WTC11 (cell line): ENCODE measurements at regions of chr6 and their contacts with region 1.

Region 1: DNA sequence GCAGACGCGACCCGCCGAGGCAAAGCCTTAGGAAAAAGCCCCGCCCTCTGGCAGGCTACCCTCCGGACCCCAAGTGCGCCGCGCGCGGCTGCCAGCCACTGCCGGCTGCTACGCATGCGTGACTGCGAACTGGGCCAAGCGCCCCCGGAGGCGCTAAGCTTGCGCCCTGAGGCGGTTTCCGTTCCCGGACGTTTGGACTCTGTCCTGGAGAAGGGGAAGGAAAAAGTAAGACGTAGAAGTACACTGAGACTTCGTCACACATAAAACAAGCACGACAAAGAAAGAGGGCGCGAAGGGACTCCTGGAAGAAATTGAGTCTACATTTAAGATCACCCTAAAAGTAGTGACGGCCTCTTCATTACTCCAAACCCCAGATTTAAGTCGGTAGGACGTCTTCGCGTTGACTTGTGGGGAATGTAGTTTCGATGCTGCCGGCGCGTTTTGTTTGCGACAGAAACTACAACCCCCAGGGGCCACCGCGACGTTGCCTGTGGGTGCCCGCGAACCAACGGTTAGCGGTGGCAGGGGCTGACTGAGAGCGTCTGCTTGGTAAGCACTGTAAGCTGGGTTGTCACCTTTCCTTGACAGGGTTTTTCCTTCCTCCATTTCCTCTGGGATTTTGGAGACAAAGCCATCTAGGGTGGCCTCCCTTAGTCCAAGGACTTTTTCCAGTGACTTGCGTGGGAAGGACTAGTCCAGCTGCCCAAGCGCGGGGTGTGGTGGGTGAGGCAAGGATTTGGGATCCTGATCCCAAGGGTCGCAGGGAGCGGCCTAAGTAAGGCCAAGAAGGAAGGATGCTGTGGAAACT is at the start of gene CEP57L1:
- DNase-seq: peak; percentile 99
- ATAC-seq: peak; percentile 65
- H3K4me3 Mint-ChIP-seq: peak within 1 kb of the TSS; percentile 91
- H3K27ac Mint-ChIP-seq: peak within 1 kb of the TSS; percentile 99
- H3K4me1 Mint-ChIP-seq: peaks cover 25% of the 10 kb centered on the region
- H3K27me3 Mint-ChIP-seq: no peaks in the 10 kb centered on the region
- CTCF ChIP-seq: no peak
- total RNA-seq, gene CEP57L1: 12.2 to 13.3 TPM (median 13.1 TPM) in 3 replicates

Region 2: DNA sequence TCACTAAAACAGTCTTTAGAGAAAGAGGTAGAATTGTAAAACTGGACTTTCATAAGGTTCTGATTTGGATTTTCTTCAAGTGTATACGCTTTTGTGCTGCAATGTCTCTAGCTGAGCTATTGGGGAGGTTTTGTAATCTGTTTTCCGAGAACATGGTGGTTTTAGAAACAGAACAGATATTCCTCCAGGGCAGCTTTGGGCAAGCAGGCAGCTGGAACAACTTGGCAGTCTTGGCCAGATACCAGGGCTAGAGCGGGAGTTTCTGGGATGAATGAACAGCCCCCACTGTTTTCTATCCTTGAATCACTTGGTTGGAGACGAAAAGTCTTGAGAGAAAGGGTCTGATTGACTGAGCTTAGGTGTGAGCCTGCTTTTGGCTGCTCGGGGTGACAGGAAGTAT is 264.1 kb before region 1 on chr6:
- CTCF ChIA-PET with region 1: no interaction called
- POLR2A ChIA-PET with region 1: no interaction called
- DNase-seq: no peak
- ATAC-seq: no peak
- H3K4me3 Mint-ChIP-seq: no peak overlapping the region
- H3K27ac Mint-ChIP-seq: no peak overlapping the region
- H3K4me1 Mint-ChIP-seq: no peaks in the 10 kb centered on the region
- H3K27me3 Mint-ChIP-seq: no peaks in the 10 kb centered on the region; the same call in 1 of the 2 replicates
- CTCF ChIP-seq: no peak

Region 3: GRCh38 chr6:109073344-109074132 is 21.7 kb before region 1 on chr6:
- CTCF ChIA-PET with region 1: interaction called, 14 read pairs
- POLR2A ChIA-PET with region 1: no interaction called
- DNase-seq: no peak
- ATAC-seq: peak; percentile 48
- H3K4me3 Mint-ChIP-seq: no peak overlapping the region
- H3K27ac Mint-ChIP-seq: no peak overlapping the region
- H3K4me1 Mint-ChIP-seq: peaks cover 4% of the 10 kb centered on the region
- H3K27me3 Mint-ChIP-seq: no peaks in the 10 kb centered on the region
- CTCF ChIP-seq: peak; percentile 52